T-cell (primary cell): ENCODE measurements at regions of chr14 and their contacts with region 1.

Region 1: DNA sequence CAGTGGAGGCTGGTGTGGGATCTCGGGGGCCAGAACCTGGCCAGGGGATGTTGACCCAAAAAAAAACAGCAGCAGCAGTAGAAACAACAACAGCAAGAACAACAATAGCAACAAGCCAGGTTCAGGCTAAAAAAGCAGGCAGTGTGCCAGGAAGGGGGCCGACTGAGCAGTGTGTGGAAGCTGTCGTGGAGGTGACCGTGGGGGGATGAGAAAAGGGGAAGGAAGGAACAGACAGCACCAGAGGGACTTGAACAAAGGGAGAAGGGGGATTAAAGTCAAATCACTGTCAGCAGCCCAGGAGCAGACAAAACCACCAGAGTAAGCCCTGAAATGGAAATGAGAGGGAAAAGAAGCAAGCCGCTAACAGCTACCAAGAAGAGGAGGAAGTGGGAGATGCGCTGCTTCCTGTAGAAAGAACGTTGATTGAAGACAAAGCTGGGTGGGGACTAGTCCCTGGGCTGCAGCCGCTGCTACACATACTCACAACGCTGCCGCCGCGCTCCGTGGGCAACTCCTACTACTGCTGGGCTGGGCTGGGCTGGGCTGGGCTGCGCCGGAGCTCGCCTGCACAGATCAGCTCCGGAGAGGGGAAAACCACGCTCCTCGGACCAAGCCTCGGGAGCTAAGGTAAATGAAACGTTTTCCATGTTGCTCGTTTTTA is at the start of gene GNG2:
- DNase-seq: peak; percentile 66 to 92 (median 82)
- ATAC-seq: peak; percentile 97 to 99 (median 99)
- H3K4me3 ChIP-seq: peak within 1 kb of the TSS; percentile 79 to 97
- H3K4me3 Mint-ChIP-seq: peak within 1 kb of the TSS; percentile 95 to 96 (median 96)
- H3K27ac ChIP-seq: peak within 1 kb of the TSS; percentile 94
- H3K27ac Mint-ChIP-seq: peak within 1 kb of the TSS; percentile 96 to 97
- H3K4me1 ChIP-seq: peaks cover 33 to 56% of the 10 kb centered on the region in 2 experiments
- H3K4me1 Mint-ChIP-seq: peaks cover 58 to 94% (median 64%) of the 10 kb centered on the region in 3 donors
- H3K27me3 ChIP-seq: no peaks in the 10 kb centered on the region
- H3K27me3 Mint-ChIP-seq: no peaks in the 10 kb centered on the region
- total RNA-seq, gene GNG2: 82.2 to 197 (median 99.0) TPM

Region 2: DNA sequence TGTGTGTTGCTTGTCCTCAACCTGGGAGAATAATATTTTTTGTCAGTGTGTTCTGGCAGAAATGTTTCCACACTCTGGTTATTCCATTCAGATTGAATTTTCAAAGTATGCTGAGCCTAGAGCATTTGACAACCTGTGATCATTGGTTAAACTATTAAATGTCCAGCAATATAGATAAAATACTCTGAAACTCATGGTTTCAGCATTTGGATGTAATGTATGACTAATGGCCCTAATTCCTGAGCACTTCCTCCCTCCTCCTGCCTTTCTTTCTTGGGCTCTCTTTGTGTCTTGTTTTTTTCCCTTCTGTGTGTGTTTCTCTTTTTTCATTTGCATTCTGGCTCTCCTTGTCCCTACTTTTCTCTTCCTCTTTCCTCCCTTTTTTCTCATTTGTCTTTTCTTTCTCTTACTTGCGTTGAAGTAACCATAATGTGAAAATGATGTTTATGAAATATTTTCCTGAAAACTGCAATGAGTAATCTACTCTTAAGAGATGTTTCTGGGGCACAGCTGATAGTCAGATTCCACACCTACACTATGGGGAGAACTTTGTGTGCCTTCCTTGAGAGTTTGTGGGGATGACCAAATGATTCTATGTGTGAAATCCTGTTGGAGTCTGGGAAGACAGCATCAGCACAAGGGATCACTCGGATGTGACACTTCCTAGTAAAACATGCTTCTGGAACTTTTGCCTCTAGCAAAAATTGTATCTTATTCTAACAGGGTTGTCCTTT is 134.0 kb before region 1 on chr14:
- CTCF ChIA-PET with region 1: no interaction called
- POLR2A ChIA-PET with region 1: no interaction called
- DNase-seq: no peak
- ATAC-seq: no peak
- H3K4me3 ChIP-seq: no peak overlapping the region
- H3K4me3 Mint-ChIP-seq: no peak overlapping the region
- H3K27ac ChIP-seq: no peak overlapping the region
- H3K27ac Mint-ChIP-seq: peak overlapping the region in 1 of 2 donors; percentile 2
- H3K4me1 ChIP-seq: no peaks in the 10 kb centered on the region
- H3K4me1 Mint-ChIP-seq: no peaks in the 10 kb centered on the region
- H3K27me3 ChIP-seq: no peaks in the 10 kb centered on the region
- H3K27me3 Mint-ChIP-seq: peaks cover 0 to 3% of the 10 kb centered on the region in 2 donors

Region 3: GRCh38 chr14:51792819-51793218 is 67.5 kb before region 1 on chr14:
- CTCF ChIA-PET with region 1: no interaction called
- POLR2A ChIA-PET with region 1: no interaction called
- DNase-seq: no peak
- ATAC-seq: no peak
- H3K4me3 ChIP-seq: no peak overlapping the region
- H3K4me3 Mint-ChIP-seq: no peak overlapping the region
- H3K27ac ChIP-seq: no peak overlapping the region
- H3K27ac Mint-ChIP-seq: no peak overlapping the region
- H3K4me1 ChIP-seq: no peaks in the 10 kb centered on the region
- H3K4me1 Mint-ChIP-seq: no peaks in the 10 kb centered on the region
- H3K27me3 ChIP-seq: no peaks in the 10 kb centered on the region
- H3K27me3 Mint-ChIP-seq: peaks cover 13 to 17% of the 10 kb centered on the region in 2 donors

Region 4: GRCh38 chr14:51828017-51828797 is 32.1 kb before region 1 on chr14:
- CTCF ChIA-PET with region 1: interaction called in 1 of 2 experiments, 8 read pairs
- POLR2A ChIA-PET with region 1: interaction called, 3 to 11 read pairs
- DNase-seq: peak; percentile 15 to 69 (median 42)
- ATAC-seq: peak; percentile 97 to 100 (median 98)
- H3K4me3 ChIP-seq: no peak overlapping the region
- H3K4me3 Mint-ChIP-seq: no peak overlapping the region
- H3K27ac ChIP-seq: no peak overlapping the region
- H3K27ac Mint-ChIP-seq: peak overlapping the region; percentile 4 to 8
- H3K4me1 ChIP-seq: peaks cover 9 to 10% of the 10 kb centered on the region in 2 experiments
- H3K4me1 Mint-ChIP-seq: no peaks in the 10 kb centered on the region
- H3K27me3 ChIP-seq: no peaks in the 10 kb centered on the region
- H3K27me3 Mint-ChIP-seq: peaks cover 0 to 3% of the 10 kb centered on the region in 2 donors

Region 5: DNA sequence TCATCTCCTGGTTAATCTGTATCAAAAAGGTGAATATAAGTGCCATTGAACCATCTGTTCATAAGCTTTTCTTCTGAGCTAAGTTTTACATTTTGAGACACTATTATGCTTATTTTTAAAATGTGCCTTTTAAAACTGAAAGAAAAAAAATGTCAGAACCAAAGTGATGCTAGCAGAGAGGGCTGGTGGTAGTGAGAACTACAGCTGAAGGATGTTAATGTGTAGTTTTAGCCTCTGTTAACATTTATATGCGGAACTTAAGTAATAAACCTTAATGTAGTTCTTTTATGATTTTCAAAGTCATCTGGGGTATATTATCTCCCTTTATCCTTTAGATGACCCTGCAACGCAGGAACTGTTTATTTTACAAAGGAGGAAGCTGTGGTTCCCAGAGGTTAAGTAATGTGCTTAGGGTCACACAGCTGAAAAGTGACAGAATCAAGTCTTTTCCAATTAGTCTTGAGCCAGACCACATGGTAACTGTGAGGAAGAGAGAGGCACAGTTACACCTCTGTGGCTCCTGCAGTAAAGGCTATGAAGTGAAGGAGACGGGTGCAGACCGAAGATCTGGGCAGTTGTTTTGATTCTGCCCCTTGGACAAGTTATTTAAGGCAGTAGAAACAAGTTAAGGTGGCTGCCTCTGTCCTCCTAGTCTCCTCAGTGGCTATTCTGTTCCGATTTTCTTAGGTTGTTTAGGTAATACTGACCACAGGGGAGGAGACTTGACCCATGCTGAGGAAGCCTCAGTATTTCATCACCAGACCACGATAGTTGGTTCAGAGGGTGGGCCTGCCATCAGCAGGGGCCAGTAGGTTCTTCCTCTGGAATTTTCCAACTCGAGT is 24.0 kb after region 1 on chr14:
- CTCF ChIA-PET with region 1: interaction called in 1 of 2 experiments, 5 read pairs
- POLR2A ChIA-PET with region 1: interaction called, 6 to 11 read pairs
- DNase-seq: peak in 1 of 35 experiments; percentile 10
- ATAC-seq: peak; percentile 46 to 66 (median 54)
- H3K4me3 ChIP-seq: no peak overlapping the region
- H3K4me3 Mint-ChIP-seq: peak overlapping the region; percentile 29 to 50 (median 43)
- H3K27ac ChIP-seq: peak overlapping the region; percentile 32
- H3K27ac Mint-ChIP-seq: peak overlapping the region; percentile 82 to 86
- H3K4me1 ChIP-seq: peaks cover 33 to 42% of the 10 kb centered on the region in 2 experiments
- H3K4me1 Mint-ChIP-seq: peaks cover 89 to 92% (median 90%) of the 10 kb centered on the region in 3 donors
- H3K27me3 ChIP-seq: no peaks in the 10 kb centered on the region
- H3K27me3 Mint-ChIP-seq: no peaks in the 10 kb centered on the region

Region 6: DNA sequence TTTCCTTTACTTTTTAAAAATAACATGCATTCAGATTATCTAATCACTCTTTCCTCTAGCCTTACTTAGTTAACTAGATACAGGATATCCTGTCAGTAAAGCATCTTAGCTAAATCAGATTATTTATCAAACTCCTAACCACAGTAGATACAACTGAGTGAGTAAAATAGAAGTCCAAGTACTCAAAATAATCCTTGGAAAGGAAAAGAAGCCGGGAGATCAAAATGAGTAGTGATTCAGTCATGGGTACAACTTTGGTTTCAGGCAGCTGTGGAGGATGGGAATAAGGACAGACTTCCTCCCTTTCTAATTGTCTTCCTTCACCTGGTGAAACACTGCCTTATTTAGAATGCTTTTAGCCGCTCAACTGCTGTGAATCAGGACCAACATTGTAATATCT is 29.6 kb after region 1 on chr14:
- CTCF ChIA-PET with region 1: interaction called in 1 of 2 experiments, 5 read pairs
- POLR2A ChIA-PET with region 1: interaction called, 5 to 11 read pairs
- DNase-seq: no peak
- ATAC-seq: peak; percentile 62 to 82 (median 74)
- H3K4me3 ChIP-seq: no peak overlapping the region
- H3K4me3 Mint-ChIP-seq: peak overlapping the region; percentile 21 to 52 (median 51)
- H3K27ac ChIP-seq: peak overlapping the region; percentile 1
- H3K27ac Mint-ChIP-seq: peak overlapping the region; percentile 40 to 88
- H3K4me1 ChIP-seq: peaks cover 23 to 25% of the 10 kb centered on the region in 2 experiments
- H3K4me1 Mint-ChIP-seq: peaks cover 86 to 94% (median 91%) of the 10 kb centered on the region in 3 donors
- H3K27me3 ChIP-seq: no peaks in the 10 kb centered on the region
- H3K27me3 Mint-ChIP-seq: no peaks in the 10 kb centered on the region

Region 7: GRCh38 chr14:51901475-51902024 is 41.3 kb after region 1 on chr14:
- CTCF ChIA-PET with region 1: interaction called in 1 of 2 experiments, 3 read pairs
- POLR2A ChIA-PET with region 1: interaction called, 3 to 16 read pairs
- DNase-seq: peak in 21 of 35 experiments; percentile 7 to 59 (median 25)
- ATAC-seq: peak; percentile 71 to 90 (median 77)
- H3K4me3 ChIP-seq: no peak overlapping the region
- H3K4me3 Mint-ChIP-seq: peak overlapping the region in 1 of 3 donors; percentile 29
- H3K27ac ChIP-seq: no peak overlapping the region
- H3K27ac Mint-ChIP-seq: peak overlapping the region; percentile 58 to 76
- H3K4me1 ChIP-seq: peaks cover 10 to 27% of the 10 kb centered on the region in 2 experiments
- H3K4me1 Mint-ChIP-seq: peaks cover 68 to 85% (median 80%) of the 10 kb centered on the region in 3 donors
- H3K27me3 ChIP-seq: no peaks in the 10 kb centered on the region
- H3K27me3 Mint-ChIP-seq: no peaks in the 10 kb centered on the region

Region 8: DNA sequence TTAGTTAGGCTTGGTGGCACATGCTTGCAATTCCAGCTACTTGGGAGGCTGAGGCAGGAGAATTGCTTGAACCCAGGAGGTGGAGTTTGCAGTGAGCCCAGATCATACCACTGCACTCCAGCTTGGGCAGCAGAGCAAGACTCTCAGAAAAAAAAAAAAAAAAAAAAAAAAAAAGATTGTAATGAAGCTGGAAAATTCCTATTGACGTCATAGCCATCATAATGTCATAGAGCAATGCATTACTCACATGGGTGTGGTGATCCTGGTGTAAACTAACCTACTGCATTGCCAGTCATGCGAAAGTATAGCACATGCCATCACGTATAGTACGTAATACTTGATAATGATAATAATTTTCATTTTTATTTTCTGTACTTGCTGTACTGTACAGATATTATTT is 251.3 kb after region 1 on chr14:
- CTCF ChIA-PET with region 1: no interaction called
- POLR2A ChIA-PET with region 1: no interaction called
- DNase-seq: no peak
- ATAC-seq: no peak
- H3K4me3 ChIP-seq: no peak overlapping the region
- H3K4me3 Mint-ChIP-seq: no peak overlapping the region
- H3K27ac ChIP-seq: no peak overlapping the region
- H3K27ac Mint-ChIP-seq: no peak overlapping the region
- H3K4me1 ChIP-seq: no peaks in the 10 kb centered on the region
- H3K4me1 Mint-ChIP-seq: no peaks in the 10 kb centered on the region
- H3K27me3 ChIP-seq: no peaks in the 10 kb centered on the region
- H3K27me3 Mint-ChIP-seq: peaks cover 0 to 5% of the 10 kb centered on the region in 2 donors